Esophagus muscularis mucosa (tissue), 4 donors: ENCODE measurements at regions of chr2 and their contacts with region 1.

Region 1: DNA sequence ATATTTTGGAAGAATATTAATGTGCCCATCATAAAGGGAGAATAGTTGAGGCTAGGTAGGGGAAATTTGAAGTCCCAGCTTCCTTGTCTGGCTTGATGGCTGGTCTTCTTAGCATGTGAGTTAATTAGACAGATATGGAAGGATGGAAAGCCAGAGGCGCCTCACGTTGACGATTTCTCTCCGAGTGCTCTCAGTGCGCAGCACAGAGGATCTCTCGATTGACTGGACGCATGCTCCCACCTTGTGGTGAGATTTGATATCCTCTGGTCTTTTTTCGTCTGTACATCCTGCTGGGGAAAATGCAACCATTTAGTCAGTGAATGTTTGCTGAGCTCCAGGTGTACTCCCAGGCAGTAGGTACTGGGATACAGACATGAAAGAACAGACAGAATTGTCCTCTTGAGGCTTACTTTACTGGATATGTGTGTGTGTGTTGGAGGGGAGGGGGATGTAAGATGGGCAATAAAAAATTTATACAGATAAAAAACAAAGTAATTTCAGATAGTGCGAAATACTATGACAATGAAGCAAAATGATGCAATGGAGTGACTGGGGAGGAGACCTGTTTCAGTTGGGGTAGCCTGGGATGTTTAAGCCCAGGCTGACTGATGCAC is 66.9 kb upstream of the ZNG1B start:
- DNase-seq: no peak
- H3K4me3 ChIP-seq: no peak overlapping the region
- H3K27ac ChIP-seq: no peak overlapping the region
- H3K4me1 ChIP-seq: peaks cover 0 to 6% (median 4%) of the 10 kb centered on the region in 4 donors
- H3K27me3 ChIP-seq: peaks cover 0 to 3% (median 0%) of the 10 kb centered on the region in 4 donors
- CTCF ChIP-seq: peak; percentile 64 to 80 (median 70)
- EP300 ChIP-seq: no peak
- POLR2A ChIP-seq: no peak

Region 2: GRCh38 chr2:113138428-113139322 is 231.9 kb before region 1 on chr2:
- intact Hi-C with region 1: loop called (anchors 5 kb)
- DNase-seq: no peak
- H3K4me3 ChIP-seq: no peak overlapping the region
- H3K27ac ChIP-seq: no peak overlapping the region
- H3K4me1 ChIP-seq: peaks cover 0 to 6% (median 2%) of the 10 kb centered on the region in 4 donors
- H3K27me3 ChIP-seq: no peaks in the 10 kb centered on the region
- CTCF ChIP-seq: peak; percentile 71 to 81 (median 76)
- EP300 ChIP-seq: no peak
- POLR2A ChIP-seq: no peak

Region 3: GRCh38 chr2:113203901-113204519 is 166.6 kb before region 1 on chr2:
- intact Hi-C with region 1: loop called (anchors 2 kb)
- DNase-seq: no peak
- H3K4me3 ChIP-seq: no peak overlapping the region
- H3K27ac ChIP-seq: no peak overlapping the region
- H3K4me1 ChIP-seq: peaks cover 7 to 24% (median 14%) of the 10 kb centered on the region in 4 donors
- H3K27me3 ChIP-seq: no peaks in the 10 kb centered on the region
- CTCF ChIP-seq: peak; percentile 74 to 90 (median 88)
- EP300 ChIP-seq: no peak
- POLR2A ChIP-seq: no peak

Region 4: DNA sequence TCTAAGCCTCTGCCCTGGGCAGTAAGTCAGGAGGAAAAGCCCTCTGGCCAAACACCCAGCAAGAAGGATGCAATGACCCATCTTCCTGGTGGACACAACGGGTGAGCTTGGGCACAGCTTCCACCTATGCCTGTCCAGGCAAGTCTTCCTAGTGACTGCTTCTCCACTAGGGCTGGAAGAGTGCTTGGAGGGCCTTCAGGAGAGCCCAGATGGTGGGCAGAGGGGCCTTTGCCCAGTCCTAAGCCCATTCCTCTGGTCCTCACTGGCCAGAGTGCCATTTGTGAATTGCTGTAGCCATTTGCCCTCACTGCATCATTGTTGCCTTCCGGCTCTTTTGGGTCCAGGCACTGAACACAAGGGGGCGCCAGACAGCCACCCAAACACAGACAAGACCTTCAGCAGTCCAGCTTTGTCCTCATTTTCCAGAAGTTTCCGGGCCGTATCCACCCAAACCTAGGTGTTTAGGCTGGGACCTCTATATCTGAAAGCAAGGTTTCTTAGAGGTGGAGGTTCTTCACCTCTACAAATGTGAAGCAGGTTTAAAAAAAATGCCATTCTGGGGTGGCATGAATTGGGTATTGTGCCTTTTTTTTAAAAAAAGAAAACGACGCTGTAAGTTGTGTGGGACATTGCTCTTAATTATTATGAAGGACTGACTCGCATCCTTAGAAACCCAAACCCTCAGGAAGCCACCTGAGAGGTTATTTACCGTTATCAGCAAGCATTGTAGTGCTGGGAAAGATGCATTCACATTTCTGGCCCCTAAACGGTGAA is 121.4 kb before region 1 on chr2:
- intact Hi-C with region 1: loop called (anchors 1 kb)
- DNase-seq: peak; percentile 95
- H3K4me3 ChIP-seq: no peak overlapping the region
- H3K27ac ChIP-seq: no peak overlapping the region
- H3K4me1 ChIP-seq: peaks cover 6 to 11% (median 9%) of the 10 kb centered on the region in 4 donors
- H3K27me3 ChIP-seq: no peaks in the 10 kb centered on the region
- CTCF ChIP-seq: peak; percentile 87 to 92 (median 89)
- EP300 ChIP-seq: no peak
- POLR2A ChIP-seq: no peak

Region 5: DNA sequence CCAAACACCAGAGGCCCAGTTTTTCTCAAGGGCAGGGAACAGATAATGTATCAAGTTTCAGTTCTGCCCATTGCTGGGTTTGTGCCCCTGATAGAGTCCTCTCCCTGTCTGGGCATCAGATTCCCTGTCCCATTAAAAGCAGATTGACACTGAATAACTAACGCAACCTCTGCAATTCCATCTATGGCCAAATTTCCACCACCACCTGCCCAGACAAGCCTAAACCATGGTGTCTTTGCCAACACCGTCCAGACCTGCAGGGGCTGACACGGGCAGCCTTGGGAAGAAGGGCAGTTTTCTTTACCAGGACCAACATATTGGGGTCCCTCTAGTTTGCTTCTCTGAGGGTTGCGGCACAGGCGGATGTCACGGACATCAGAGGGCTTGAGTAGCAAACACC is 65.4 kb before region 1 on chr2:
- intact Hi-C with region 1: no loop called
- DNase-seq: no peak
- H3K4me3 ChIP-seq: no peak overlapping the region
- H3K27ac ChIP-seq: no peak overlapping the region
- H3K4me1 ChIP-seq: no peaks in the 10 kb centered on the region
- H3K27me3 ChIP-seq: no peaks in the 10 kb centered on the region
- CTCF ChIP-seq: no peak
- EP300 ChIP-seq: no peak
- POLR2A ChIP-seq: no peak

Region 6: GRCh38 chr2:113316085-113316484 is 54.5 kb before region 1 on chr2:
- intact Hi-C with region 1: no loop called
- DNase-seq: no peak
- H3K4me3 ChIP-seq: no peak overlapping the region
- H3K27ac ChIP-seq: no peak overlapping the region
- H3K4me1 ChIP-seq: no peaks in the 10 kb centered on the region
- H3K27me3 ChIP-seq: no peaks in the 10 kb centered on the region
- CTCF ChIP-seq: no peak
- EP300 ChIP-seq: no peak
- POLR2A ChIP-seq: no peak

Region 7: GRCh38 chr2:113407446-113408099 is 37.0 kb after region 1 on chr2:
- intact Hi-C with region 1: no loop called
- DNase-seq: no peak
- H3K4me3 ChIP-seq: no peak overlapping the region
- H3K27ac ChIP-seq: no peak overlapping the region
- H3K4me1 ChIP-seq: no peaks in the 10 kb centered on the region
- H3K27me3 ChIP-seq: peaks cover 0 to 6% (median 0%) of the 10 kb centered on the region in 4 donors
- CTCF ChIP-seq: no peak
- EP300 ChIP-seq: no peak
- POLR2A ChIP-seq: no peak

Region 8: GRCh38 chr2:113886479-113887008 is 516.0 kb after region 1 on chr2:
- intact Hi-C with region 1: no loop called
- DNase-seq: no peak
- H3K4me3 ChIP-seq: no peak overlapping the region
- H3K27ac ChIP-seq: peak overlapping the region in 2 of 4 donors; percentile 17 to 20
- H3K4me1 ChIP-seq: peaks cover 21 to 35% (median 29%) of the 10 kb centered on the region in 4 donors
- H3K27me3 ChIP-seq: no peaks in the 10 kb centered on the region
- CTCF ChIP-seq: no peak
- EP300 ChIP-seq: no peak
- POLR2A ChIP-seq: no peak